CD8-positive, alpha-beta T cell (primary cell): ENCODE measurements at regions of chrX and their contacts with region 1.

Region 1: DNA sequence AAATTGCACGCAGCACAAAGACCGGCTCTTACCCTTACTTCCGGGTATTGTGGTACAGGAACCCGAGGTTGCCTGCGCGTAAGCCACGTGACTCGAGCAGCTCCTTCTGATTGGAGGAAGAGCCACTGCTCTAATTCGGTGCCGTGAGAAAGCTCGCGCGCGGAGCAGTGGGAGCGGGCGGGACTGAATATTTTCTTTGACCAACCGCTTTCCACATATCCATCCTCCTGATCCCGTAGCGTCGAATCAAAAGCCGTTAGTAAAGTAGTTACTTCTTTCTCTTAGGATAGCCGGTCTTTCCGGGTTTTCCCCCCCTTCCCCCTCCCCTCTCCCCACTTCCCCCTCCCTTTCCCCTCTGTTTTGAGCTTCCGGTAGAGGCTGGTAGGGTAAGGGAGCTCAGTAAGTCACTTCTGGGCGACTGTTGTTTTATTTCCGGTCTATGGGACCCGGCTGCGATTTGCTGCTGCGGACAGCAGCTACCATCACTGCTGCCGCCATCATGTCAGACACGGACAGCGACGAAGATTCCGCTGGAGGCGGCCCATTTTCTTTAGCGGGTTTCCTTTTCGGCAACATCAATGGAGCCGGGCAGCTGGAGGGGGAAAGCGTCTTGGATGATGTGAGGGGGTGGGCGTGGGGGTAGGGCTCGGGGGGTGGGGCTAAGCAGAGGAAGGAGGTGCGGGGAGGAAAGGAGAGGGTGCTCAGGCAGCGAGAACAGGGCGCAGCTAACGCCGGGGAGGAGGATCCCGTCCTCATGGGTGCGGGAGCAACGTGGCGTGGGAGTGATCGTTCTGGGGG is at the start of gene TAF1:
- DNase-seq: peak; percentile 76 to 97 (median 88)
- ATAC-seq: peak; percentile 86
- H3K4me3 ChIP-seq: peak within 1 kb of the TSS; percentile 85 to 95
- H3K4me3 Mint-ChIP-seq: peak within 1 kb of the TSS; percentile 98
- H3K27ac ChIP-seq: peak within 1 kb of the TSS; percentile 87 to 91
- H3K27ac Mint-ChIP-seq: peak within 1 kb of the TSS; percentile 100
- H3K4me1 ChIP-seq: peaks cover 14% of the 10 kb centered on the region
- H3K4me1 Mint-ChIP-seq: peaks cover 28% of the 10 kb centered on the region
- H3K27me3 ChIP-seq: no peaks in the 10 kb centered on the region
- H3K27me3 Mint-ChIP-seq: no peaks in the 10 kb centered on the region
- CTCF ChIP-seq: no peak
- total RNA-seq, gene TAF1: 48.2 to 61.3 TPM

Region 2: GRCh38 chrX:70133303-70134115 is 1232.6 kb before region 1 on chrX and contains the start of gene IGBP1:
- CTCF ChIA-PET with region 1: no interaction called
- POLR2A ChIA-PET with region 1: no interaction called
- intact Hi-C with region 1: loop called in 1 of 2 experiments (anchors 10 kb)
- DNase-seq: peak; percentile 48 to 93 (median 76)
- ATAC-seq: peak; percentile 81
- H3K4me3 ChIP-seq: peak within 1 kb of the TSS; percentile 84 to 88
- H3K4me3 Mint-ChIP-seq: peak within 1 kb of the TSS; percentile 99
- H3K27ac ChIP-seq: peak within 1 kb of the TSS; percentile 95 to 96
- H3K27ac Mint-ChIP-seq: peak within 1 kb of the TSS; percentile 98
- H3K4me1 ChIP-seq: peaks cover 21% of the 10 kb centered on the region
- H3K4me1 Mint-ChIP-seq: peaks cover 45% of the 10 kb centered on the region
- H3K27me3 ChIP-seq: no peaks in the 10 kb centered on the region
- H3K27me3 Mint-ChIP-seq: no peaks in the 10 kb centered on the region
- CTCF ChIP-seq: peak; percentile 48
- total RNA-seq, gene IGBP1: 55.7 to 56.6 TPM

Region 3: GRCh38 chrX:70354716-70355115 is 1011.4 kb before region 1 on chrX:
- CTCF ChIA-PET with region 1: no interaction called
- POLR2A ChIA-PET with region 1: no interaction called
- intact Hi-C with region 1: no loop called
- DNase-seq: no peak
- ATAC-seq: no peak
- H3K4me3 ChIP-seq: no peak overlapping the region
- H3K4me3 Mint-ChIP-seq: no peak overlapping the region
- H3K27ac ChIP-seq: no peak overlapping the region
- H3K27ac Mint-ChIP-seq: no peak overlapping the region
- H3K4me1 ChIP-seq: no peaks in the 10 kb centered on the region
- H3K4me1 Mint-ChIP-seq: no peaks in the 10 kb centered on the region
- H3K27me3 ChIP-seq: no peaks in the 10 kb centered on the region
- H3K27me3 Mint-ChIP-seq: no peaks in the 10 kb centered on the region
- CTCF ChIP-seq: no peak

Region 4: GRCh38 chrX:71095543-71095911 is 270.5 kb before region 1 on chrX and contains the start of gene FOXO4:
- CTCF ChIA-PET with region 1: no interaction called
- POLR2A ChIA-PET with region 1: interaction called, 4 read pairs
- intact Hi-C with region 1: loop called (anchors 5 to 10 kb)
- DNase-seq: peak; percentile 74 to 94 (median 88)
- ATAC-seq: peak; percentile 82
- H3K4me3 ChIP-seq: peak within 1 kb of the TSS; percentile 73 to 78
- H3K4me3 Mint-ChIP-seq: peak within 1 kb of the TSS; percentile 93
- H3K27ac ChIP-seq: peak within 1 kb of the TSS; percentile 34 to 68
- H3K27ac Mint-ChIP-seq: peak within 1 kb of the TSS; percentile 93
- H3K4me1 ChIP-seq: peaks cover 30% of the 10 kb centered on the region
- H3K4me1 Mint-ChIP-seq: peaks cover 37% of the 10 kb centered on the region
- H3K27me3 ChIP-seq: no peaks in the 10 kb centered on the region
- H3K27me3 Mint-ChIP-seq: no peaks in the 10 kb centered on the region
- CTCF ChIP-seq: no peak
- total RNA-seq, gene FOXO4: 24.1 to 32.6 TPM

Region 5: DNA sequence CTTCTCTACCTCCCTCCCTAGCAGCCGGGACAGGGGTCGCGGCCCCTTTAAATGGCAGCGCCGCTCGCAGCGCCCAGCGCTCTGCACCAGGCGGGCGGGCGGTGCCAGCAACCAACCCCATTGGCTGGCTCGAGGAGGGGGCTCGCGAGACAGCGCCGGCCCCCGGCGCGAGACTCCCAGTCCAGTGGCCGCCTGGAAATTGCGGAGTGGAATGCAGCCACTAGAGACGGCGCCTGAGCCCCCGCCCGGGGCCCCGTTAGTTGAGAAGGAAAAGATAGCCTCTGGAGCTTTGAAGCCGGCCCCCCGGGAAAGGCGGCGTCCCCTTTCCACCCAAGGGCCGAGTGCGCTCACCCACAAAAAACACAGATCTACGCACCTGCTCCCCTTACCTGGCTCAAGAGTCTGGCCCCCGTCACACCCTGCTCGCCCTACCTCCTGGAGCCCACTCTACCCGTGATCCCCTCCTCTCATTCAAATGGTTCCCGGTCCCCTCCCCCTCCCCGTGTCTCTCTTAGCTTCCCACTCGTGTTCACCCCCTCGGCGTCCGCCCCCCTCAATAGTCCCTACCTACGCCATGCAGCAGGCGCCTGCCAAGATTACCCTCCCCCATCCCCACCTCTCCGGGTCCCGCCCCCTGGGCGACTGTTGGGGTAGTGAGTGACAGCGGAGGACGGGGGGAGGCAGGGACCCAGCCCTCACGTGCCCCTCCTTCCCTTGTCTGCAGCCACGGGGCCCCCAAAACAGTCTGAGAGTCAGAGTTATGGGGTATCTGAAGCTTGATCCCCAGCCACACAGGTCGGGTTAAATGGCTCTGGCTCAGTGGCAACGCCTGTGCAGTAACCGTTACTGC is 111.8 kb before region 1 on chrX and contains the start of gene ZMYM3:
- CTCF ChIA-PET with region 1: interaction called, 6 read pairs
- POLR2A ChIA-PET with region 1: interaction called, 33 read pairs
- intact Hi-C with region 1: loop called (anchors 1 kb)
- DNase-seq: peak; percentile 50 to 91 (median 80)
- ATAC-seq: peak; percentile 79
- H3K4me3 ChIP-seq: peak within 1 kb of the TSS; percentile 79 to 84
- H3K4me3 Mint-ChIP-seq: peak within 1 kb of the TSS; percentile 94
- H3K27ac ChIP-seq: peak within 1 kb of the TSS; percentile 85 to 87
- H3K27ac Mint-ChIP-seq: peak within 1 kb of the TSS; percentile 92
- H3K4me1 ChIP-seq: peaks cover 28% of the 10 kb centered on the region
- H3K4me1 Mint-ChIP-seq: peaks cover 26% of the 10 kb centered on the region
- H3K27me3 ChIP-seq: no peaks in the 10 kb centered on the region
- H3K27me3 Mint-ChIP-seq: no peaks in the 10 kb centered on the region
- CTCF ChIP-seq: no peak
- total RNA-seq, gene ZMYM3: 12.2 to 13.2 TPM

Region 6: DNA sequence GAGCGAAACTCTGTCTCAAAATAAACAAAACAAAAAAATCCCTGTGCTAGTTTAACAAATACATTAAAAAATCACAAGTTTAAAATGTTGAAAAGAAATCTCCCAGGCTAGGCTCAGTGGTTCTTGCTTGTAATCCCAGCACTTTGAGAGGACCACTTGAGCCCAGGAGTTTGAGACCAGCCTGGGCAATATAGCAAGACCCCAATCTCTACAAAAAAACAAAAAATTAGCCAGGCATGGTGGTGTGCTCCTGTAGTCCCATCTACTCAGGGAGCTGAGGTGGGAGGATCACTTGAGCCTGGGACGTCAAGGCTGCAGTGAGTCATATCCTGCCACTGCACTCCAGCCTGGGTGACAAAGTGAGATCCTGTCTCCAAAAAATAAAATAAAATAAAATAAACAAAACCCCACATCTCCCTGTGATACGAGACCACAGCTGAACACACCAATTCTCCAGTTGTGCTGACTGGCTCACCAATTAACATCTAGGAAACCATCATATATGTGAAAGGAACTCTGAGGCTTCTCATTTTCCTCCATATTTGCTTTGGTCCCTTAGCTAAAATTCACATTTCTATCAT is 903.7 kb after region 1 on chrX:
- CTCF ChIA-PET with region 1: no interaction called
- POLR2A ChIA-PET with region 1: no interaction called
- intact Hi-C with region 1: loop called in 1 of 2 experiments (anchors 10 kb)
- DNase-seq: peak in 5 of 9 experiments; percentile 13 to 43 (median 20)
- ATAC-seq: peak; percentile 57
- H3K4me3 ChIP-seq: no peak overlapping the region
- H3K4me3 Mint-ChIP-seq: no peak overlapping the region
- H3K27ac ChIP-seq: no peak overlapping the region
- H3K27ac Mint-ChIP-seq: peak overlapping the region; percentile 69
- H3K4me1 ChIP-seq: peaks cover 12% of the 10 kb centered on the region
- H3K4me1 Mint-ChIP-seq: peaks cover 32% of the 10 kb centered on the region
- H3K27me3 ChIP-seq: no peaks in the 10 kb centered on the region
- H3K27me3 Mint-ChIP-seq: no peaks in the 10 kb centered on the region
- CTCF ChIP-seq: no peak